ENCODE measurements at regions of chr5 and their contacts with region 1.

Region 1: GRCh38 chr5:136249678-136250266 is 56.8 kb upstream of the SMIM32 start:
- DNase-seq: no peak
- ATAC-seq: peak; percentile 89
- H3K4me3 ChIP-seq: no peak overlapping the region
- H3K27ac ChIP-seq: no peak overlapping the region
- H3K4me1 ChIP-seq: no peaks in the 10 kb centered on the region
- H3K27me3 ChIP-seq: no peaks in the 10 kb centered on the region; a peak in 2 of 4 replicates
- CTCF ChIP-seq: peak; percentile 82 to 92 (median 86)
- EP300 ChIP-seq: no peak
- POLR2A ChIP-seq: no peak
- RAD21 ChIP-seq: peak; percentile 81

Region 2: DNA sequence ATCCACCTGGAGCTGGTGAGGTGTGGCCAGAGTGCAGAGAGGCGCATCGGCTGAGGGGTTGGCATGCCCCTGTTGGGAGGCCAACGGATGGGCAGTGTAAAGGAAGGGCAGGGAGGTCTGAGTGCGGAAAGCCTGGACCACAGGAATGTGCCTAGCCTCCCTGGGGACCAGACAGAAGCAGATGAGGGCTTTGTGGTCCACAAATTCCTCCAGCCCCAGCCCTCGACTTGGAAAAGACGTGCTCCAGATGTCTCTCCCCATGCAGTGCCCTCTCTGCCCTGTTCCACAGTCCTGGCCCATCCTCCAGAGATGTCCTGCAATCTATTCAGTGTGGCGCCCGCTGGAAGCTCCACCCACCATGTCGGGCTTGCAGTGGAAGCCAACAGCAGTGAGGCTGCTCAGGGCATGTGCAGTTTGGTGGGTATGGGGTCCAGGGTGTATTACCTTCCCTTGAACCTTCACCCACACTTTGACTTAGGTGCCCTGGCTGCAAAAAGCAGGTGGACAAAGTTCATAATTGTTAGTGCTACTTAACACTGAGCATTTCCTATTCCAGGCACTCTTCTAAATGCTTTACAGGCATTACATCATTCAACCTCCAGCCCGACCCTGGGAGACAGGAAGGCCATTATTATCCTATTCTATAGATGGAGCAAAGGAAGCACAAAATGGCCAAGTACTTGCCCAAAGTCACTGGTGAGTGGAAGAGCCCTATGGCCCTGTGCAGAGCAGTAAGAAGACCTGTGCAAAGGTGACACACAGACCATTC is 535.5 kb before region 1 on chr5:
- CTCF ChIA-PET with region 1: no interaction called
- POLR2A ChIA-PET with region 1: no interaction called
- RAD21 ChIA-PET with region 1: no interaction called
- SMC1A ChIA-PET with region 1: no interaction called
- in situ Hi-C with region 1: no loop called
- intact Hi-C with region 1: no loop called
- DNase-seq: no peak
- ATAC-seq: no peak
- H3K4me3 ChIP-seq: no peak overlapping the region
- H3K27ac ChIP-seq: no peak overlapping the region
- H3K4me1 ChIP-seq: no peaks in the 10 kb centered on the region
- H3K27me3 ChIP-seq: peaks cover 3 to 4% of the 10 kb centered on the region in 2 experiments; a peak in 2 of 4 replicates
- CTCF ChIP-seq: no peak
- EP300 ChIP-seq: no peak
- POLR2A ChIP-seq: no peak
- RAD21 ChIP-seq: no peak

Region 3: DNA sequence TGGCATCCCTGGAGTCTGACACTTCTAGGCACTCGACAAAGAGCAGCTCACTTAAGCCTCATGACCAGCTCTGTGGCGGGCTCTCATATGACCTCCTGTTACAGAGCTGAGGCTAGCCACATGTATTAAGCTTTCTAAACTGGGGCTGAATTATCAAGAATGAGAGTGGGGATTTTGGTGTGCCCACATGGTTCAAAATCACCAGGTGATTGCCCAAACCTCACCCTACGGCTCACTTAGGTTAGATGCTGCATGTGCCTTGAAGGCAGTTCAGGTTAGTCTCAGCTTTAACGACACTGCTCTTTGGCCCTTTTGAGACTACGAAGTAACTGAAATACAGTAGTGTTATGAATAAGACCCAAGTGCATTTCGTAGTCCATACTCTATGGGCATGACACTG is 17.5 kb before region 1 on chr5:
- CTCF ChIA-PET with region 1: interaction called, 17 read pairs
- POLR2A ChIA-PET with region 1: interaction called, 4 read pairs
- RAD21 ChIA-PET with region 1: interaction called, 5 read pairs
- SMC1A ChIA-PET with region 1: interaction called, 5 read pairs
- in situ Hi-C with region 1: no loop called
- intact Hi-C with region 1: no loop called
- DNase-seq: peak; percentile 62
- ATAC-seq: peak; percentile 93
- H3K4me3 ChIP-seq: no peak overlapping the region
- H3K27ac ChIP-seq: no peak overlapping the region
- H3K4me1 ChIP-seq: no peaks in the 10 kb centered on the region; the same call in 1 of the 2 replicates
- H3K27me3 ChIP-seq: no peaks in the 10 kb centered on the region
- CTCF ChIP-seq: no peak
- EP300 ChIP-seq: peak; percentile 54 to 66; a peak in 1 of 4 replicates
- POLR2A ChIP-seq: no peak
- RAD21 ChIP-seq: no peak

Region 4: GRCh38 chr5:136418301-136418700 is 168.5 kb after region 1 on chr5:
- CTCF ChIA-PET with region 1: interaction called, 34 read pairs
- POLR2A ChIA-PET with region 1: no interaction called
- RAD21 ChIA-PET with region 1: interaction called, 17 read pairs
- SMC1A ChIA-PET with region 1: interaction called, 11 read pairs
- in situ Hi-C with region 1: loop called (anchors 5 kb)
- intact Hi-C with region 1: no loop called
- DNase-seq: no peak
- ATAC-seq: no peak
- H3K4me3 ChIP-seq: no peak overlapping the region
- H3K27ac ChIP-seq: no peak overlapping the region
- H3K4me1 ChIP-seq: no peaks in the 10 kb centered on the region
- H3K27me3 ChIP-seq: no peaks in the 10 kb centered on the region
- CTCF ChIP-seq: no peak
- EP300 ChIP-seq: no peak
- POLR2A ChIP-seq: no peak
- RAD21 ChIP-seq: no peak

Region 5: GRCh38 chr5:136446565-136446964 is 196.8 kb after region 1 on chr5:
- CTCF ChIA-PET with region 1: interaction called, 11 read pairs
- POLR2A ChIA-PET with region 1: no interaction called
- RAD21 ChIA-PET with region 1: no interaction called
- SMC1A ChIA-PET with region 1: interaction called, 5 read pairs
- in situ Hi-C with region 1: no loop called
- intact Hi-C with region 1: no loop called
- DNase-seq: no peak
- ATAC-seq: no peak
- H3K4me3 ChIP-seq: no peak overlapping the region
- H3K27ac ChIP-seq: no peak overlapping the region
- H3K4me1 ChIP-seq: no peaks in the 10 kb centered on the region
- H3K27me3 ChIP-seq: no peaks in the 10 kb centered on the region
- CTCF ChIP-seq: no peak
- EP300 ChIP-seq: no peak
- POLR2A ChIP-seq: no peak
- RAD21 ChIP-seq: no peak

Region 6: GRCh38 chr5:136769900-136770684 is 520.3 kb after region 1 on chr5:
- CTCF ChIA-PET with region 1: interaction called, 43 read pairs
- POLR2A ChIA-PET with region 1: no interaction called
- RAD21 ChIA-PET with region 1: interaction called, 24 read pairs
- SMC1A ChIA-PET with region 1: no interaction called
- in situ Hi-C with region 1: loop called (anchors 10 kb)
- intact Hi-C with region 1: loop called (anchors 2 kb)
- DNase-seq: no peak
- ATAC-seq: peak; percentile 89
- H3K4me3 ChIP-seq: no peak overlapping the region
- H3K27ac ChIP-seq: no peak overlapping the region
- H3K4me1 ChIP-seq: no peaks in the 10 kb centered on the region
- H3K27me3 ChIP-seq: no peaks in the 10 kb centered on the region
- CTCF ChIP-seq: peak; percentile 76 to 89 (median 80)
- EP300 ChIP-seq: no peak
- POLR2A ChIP-seq: no peak
- RAD21 ChIP-seq: peak; percentile 82

Measured in GM12878 (cell line).